SK-N-SH (cell line): ENCODE measurements at regions of chr4 and their contacts with region 1.

Region 1: GRCh38 chr4:185183619-185184281 is 20.1 kb downstream of the CFAP97 start:
- DNase-seq: peak; percentile 68
- H3K4me3 ChIP-seq: no peak overlapping the region
- H3K27ac ChIP-seq: no peak overlapping the region
- H3K4me1 ChIP-seq: peaks cover 0 to 19% of the 10 kb centered on the region in 2 experiments
- H3K27me3 ChIP-seq: no peaks in the 10 kb centered on the region
- CTCF ChIP-seq: peak; percentile 96
- EP300 ChIP-seq: no peak
- RAD21 ChIP-seq: peak; percentile 80

Region 2: DNA sequence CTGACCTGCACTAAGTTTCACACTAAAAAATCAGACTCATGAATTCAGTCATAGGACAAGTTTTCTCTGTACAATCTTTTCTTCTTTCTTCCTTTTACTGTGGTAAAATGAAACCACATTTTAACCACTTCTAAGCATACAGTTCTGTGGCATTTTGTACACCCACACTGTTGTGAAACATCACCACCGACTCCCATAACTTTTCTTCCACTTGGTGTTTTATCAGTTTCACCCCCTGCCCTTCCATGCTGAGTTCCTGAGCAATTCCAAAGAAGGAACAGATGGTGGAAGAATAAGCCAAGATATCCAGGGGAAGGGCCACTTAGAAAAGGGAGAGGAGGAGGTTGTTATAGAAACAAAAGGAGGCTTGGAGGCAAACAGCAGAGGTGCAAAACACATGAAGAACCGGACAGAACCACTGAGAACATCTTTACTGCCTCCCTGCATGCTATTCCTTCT is 18.1 kb before region 1 on chr4:
- CTCF ChIA-PET with region 1: interaction called, 28 read pairs
- POLR2A ChIA-PET with region 1: no interaction called
- DNase-seq: no peak
- H3K4me3 ChIP-seq: no peak overlapping the region
- H3K27ac ChIP-seq: no peak overlapping the region
- H3K4me1 ChIP-seq: no peaks in the 10 kb centered on the region
- H3K27me3 ChIP-seq: no peaks in the 10 kb centered on the region
- CTCF ChIP-seq: no peak
- EP300 ChIP-seq: no peak
- RAD21 ChIP-seq: no peak

Region 3: DNA sequence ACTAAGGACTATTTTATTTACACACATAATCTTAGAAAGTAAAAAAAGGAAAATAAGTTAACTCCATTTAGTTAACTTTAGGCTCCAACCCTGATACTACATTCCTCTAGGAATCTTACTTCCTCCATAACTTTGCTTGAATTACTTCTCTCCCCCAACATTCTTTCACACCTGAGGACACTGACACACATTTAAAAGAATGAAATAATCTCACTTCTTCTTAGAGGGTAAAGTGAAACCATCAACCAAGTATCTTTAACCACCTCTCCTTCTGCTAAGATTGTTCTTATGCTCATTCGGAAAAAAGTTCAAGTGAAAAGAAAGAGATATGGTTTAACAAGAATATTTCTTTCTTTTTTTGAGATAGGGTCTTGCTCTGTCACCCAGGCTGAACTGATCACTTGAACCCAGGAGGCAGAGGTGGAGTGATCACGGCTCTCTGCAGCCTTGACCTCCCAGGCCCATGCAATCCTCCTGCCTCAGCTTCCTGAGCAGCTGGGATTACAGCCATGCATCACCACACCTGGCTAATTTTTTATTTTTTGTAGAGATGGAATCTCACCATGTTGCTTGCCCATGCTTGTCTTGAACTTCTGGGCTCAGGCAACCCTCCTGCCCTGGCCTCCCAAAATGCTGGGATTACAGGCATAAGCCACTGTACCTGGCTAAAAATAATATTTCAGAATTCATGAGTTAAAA is 12.2 kb before region 1 on chr4:
- CTCF ChIA-PET with region 1: interaction called, 38 read pairs
- POLR2A ChIA-PET with region 1: no interaction called
- DNase-seq: no peak
- H3K4me3 ChIP-seq: no peak overlapping the region
- H3K27ac ChIP-seq: no peak overlapping the region
- H3K4me1 ChIP-seq: peaks cover 0 to 6% of the 10 kb centered on the region in 2 experiments; a peak in 1 of 4 replicates
- H3K27me3 ChIP-seq: no peaks in the 10 kb centered on the region
- CTCF ChIP-seq: no peak
- EP300 ChIP-seq: no peak
- RAD21 ChIP-seq: no peak

Region 4: DNA sequence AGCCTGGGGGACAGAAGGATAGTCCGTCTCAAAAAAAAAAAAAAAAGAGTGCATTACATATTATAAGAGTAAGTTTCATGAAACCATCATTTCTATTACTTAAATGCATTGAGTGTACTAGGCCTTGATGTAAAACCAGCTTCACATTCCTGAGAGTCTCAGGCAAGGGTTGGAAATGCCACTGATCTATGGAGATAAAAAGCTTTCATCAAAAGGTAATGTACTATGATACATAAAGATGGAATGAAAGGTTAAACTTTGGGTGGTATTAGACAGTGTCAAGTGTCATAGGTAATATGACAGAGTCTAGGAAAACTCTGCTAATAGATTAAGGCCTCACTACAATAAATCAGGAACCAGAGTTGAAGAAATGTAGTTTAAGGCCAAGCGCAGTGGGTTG is 12.7 kb after region 1 on chr4:
- CTCF ChIA-PET with region 1: interaction called, 19 read pairs
- POLR2A ChIA-PET with region 1: interaction called, 4 read pairs
- DNase-seq: no peak
- H3K4me3 ChIP-seq: no peak overlapping the region
- H3K27ac ChIP-seq: no peak overlapping the region
- H3K4me1 ChIP-seq: no peaks in the 10 kb centered on the region
- H3K27me3 ChIP-seq: no peaks in the 10 kb centered on the region
- CTCF ChIP-seq: no peak
- EP300 ChIP-seq: no peak
- RAD21 ChIP-seq: no peak

Region 5: GRCh38 chr4:185203486-185204237 is 19.9 kb after region 1 on chr4 and contains the start of gene CFAP97:
- CTCF ChIA-PET with region 1: interaction called, 19 read pairs
- POLR2A ChIA-PET with region 1: no interaction called
- DNase-seq: peak; percentile 94
- H3K4me3 ChIP-seq: peak within 1 kb of the TSS; percentile 61 to 72
- H3K27ac ChIP-seq: peak within 1 kb of the TSS; percentile 80 to 84
- H3K4me1 ChIP-seq: peaks cover 11 to 15% of the 10 kb centered on the region in 2 experiments; a peak in 3 of 4 replicates
- H3K27me3 ChIP-seq: no peaks in the 10 kb centered on the region
- CTCF ChIP-seq: no peak
- EP300 ChIP-seq: no peak
- RAD21 ChIP-seq: no peak
- polyA plus RNA-seq, gene CFAP97: 10.6 and 14.1 TPM in 2 replicates